Head of caudate nucleus (tissue), 42 donors: ENCODE measurements at regions of chr1 and their contacts with region 1.

Region 1: GRCh38 chr1:211830330-211831142 is at the start of gene LPGAT1:
- DNase-seq: peak; percentile 46 to 94 (median 88)

Region 2: DNA sequence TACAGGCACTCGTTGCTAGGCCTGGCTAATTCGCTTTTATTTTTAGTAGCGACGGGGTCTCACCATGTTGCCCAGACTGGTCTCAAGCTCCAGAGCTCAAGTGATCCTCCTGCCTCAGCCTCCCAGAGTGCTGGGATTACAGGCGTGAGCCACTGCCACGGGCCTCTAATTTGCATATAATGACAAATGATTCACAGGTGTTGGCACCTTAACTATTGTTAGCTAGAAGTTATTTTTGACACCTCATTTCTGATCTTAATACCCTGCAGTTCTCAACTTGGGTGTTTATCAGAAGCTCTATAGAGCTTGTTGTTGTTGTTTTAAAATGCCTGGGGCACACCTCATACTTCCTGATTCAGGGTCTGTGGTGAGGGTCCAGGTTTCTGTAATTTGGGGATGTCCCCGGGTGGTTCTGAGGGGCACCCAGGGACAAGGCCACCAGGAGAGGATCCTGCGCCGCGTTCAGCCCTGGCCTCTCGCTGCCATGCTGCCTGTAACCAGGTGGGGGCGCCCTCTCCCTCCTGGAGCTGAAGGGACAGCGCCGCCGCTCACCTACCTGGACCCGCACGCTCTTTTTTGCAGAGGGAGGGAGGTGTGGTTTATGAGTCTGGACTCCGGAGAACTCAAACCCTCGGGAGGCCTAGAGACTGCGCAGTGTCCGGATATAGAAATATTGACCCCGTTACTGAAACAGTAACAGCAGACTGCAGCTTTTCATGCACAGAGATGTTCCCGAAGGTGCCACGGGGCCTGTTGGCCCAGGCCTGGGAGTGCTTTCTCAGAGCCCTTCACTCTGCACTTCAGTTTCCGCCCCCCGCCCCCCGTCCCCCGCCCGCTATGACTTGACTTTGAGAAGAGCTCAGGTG is 132.1 kb before region 1 on chr1:
- intact Hi-C with region 1: loop called (anchors 2 kb)
- DNase-seq: peak; percentile 78 to 97 (median 90)

Region 3: GRCh38 chr1:211735208-211736170 is 95.0 kb before region 1 on chr1:
- intact Hi-C with region 1: loop called (anchors 2 kb)
- DNase-seq: peak; percentile 58 to 96 (median 86)

Region 4: DNA sequence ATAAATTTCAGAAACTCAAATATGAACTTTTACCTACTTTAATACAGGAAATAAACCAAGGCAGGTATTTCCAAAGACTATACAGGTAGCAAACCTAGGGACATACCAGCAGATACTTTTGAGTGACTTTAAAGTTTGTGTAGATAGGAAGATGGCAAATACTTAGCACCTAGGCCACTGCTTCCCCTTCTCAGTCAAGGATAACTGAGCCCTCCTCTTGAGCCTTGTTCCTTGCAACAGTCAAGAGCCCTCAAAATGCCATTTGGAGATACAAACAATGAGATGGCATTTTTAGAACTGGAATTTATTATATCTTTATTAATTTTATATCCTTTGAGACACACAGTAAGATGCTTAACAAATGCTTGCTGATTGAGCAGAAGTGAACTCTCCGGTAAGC is 65.8 kb before region 1 on chr1:
- intact Hi-C with region 1: no loop called
- DNase-seq: no peak